Activated CD8-positive, alpha-beta T cell treated with anti-CD3 and anti-CD28 coated beads for 36 hours (primary cell): ENCODE measurements at regions of chr2 and their contacts with region 1.

Region 1: GRCh38 chr2:240840435-240841080 is 20.5 kb upstream of the KIF1A start:
- DNase-seq: peak; percentile 49
- ATAC-seq: peak; percentile 49
- H3K4me3 Mint-ChIP-seq: no peak overlapping the region
- H3K27ac Mint-ChIP-seq: no peak overlapping the region
- H3K4me1 Mint-ChIP-seq: no peaks in the 10 kb centered on the region
- H3K27me3 Mint-ChIP-seq: no peaks in the 10 kb centered on the region
- CTCF ChIP-seq: peak; percentile 36

Region 2: DNA sequence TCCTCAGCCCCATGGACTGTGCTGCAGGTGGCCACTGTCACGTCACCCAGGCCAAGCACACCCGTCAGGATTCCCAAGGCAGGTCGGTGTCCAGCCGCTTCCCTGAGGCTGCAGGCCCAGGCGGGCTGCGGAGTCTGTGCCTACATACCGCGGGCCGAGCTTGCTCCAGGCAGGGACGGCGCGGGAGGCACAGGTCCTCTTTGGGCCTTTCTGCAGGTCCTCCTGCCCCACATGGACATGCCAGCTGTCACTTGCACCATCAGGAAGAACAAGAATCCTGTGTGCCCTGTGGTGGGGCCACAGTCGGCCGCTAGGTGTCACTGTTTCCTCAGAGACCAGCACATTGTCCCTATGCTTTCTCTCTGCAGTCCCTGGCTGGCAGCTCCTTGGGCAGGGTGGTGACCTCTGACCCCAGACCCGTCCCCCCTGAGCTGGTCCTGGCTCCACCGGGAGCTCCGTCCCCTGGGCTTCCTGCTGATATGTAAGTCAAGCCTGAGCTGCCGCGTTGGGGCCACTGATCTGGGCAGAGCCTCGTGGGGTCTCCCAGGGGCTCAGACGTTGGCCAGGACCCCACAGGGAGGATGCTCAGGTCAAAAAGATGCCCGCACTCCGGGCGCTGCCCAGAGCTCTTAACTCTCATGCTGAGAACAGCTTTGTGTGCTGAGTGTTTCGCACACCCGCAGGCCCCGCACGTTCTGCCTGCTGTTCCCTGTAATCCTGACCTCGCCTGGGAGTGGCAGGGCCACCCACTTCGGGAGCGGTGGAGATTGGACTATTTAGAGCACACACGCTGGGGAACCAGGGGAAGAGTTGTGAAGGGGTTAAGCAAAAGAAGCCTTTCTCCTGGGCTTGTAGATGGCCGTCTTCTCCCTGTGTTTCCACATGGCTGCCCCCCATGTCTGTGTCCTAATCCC is 10.8 kb after region 1 on chr2:
- CTCF ChIA-PET with region 1: interaction called, 18 read pairs
- POLR2A ChIA-PET with region 1: no interaction called
- intact Hi-C with region 1: no loop called
- DNase-seq: peak; percentile 90
- ATAC-seq: peak; percentile 89
- H3K4me3 Mint-ChIP-seq: no peak overlapping the region
- H3K27ac Mint-ChIP-seq: no peak overlapping the region
- H3K4me1 Mint-ChIP-seq: no peaks in the 10 kb centered on the region
- H3K27me3 Mint-ChIP-seq: no peaks in the 10 kb centered on the region
- CTCF ChIP-seq: peak; percentile 93

Region 3: GRCh38 chr2:240873805-240874714 is 33.5 kb after region 1 on chr2:
- CTCF ChIA-PET with region 1: no interaction called
- POLR2A ChIA-PET with region 1: no interaction called
- intact Hi-C with region 1: no loop called
- DNase-seq: no peak
- ATAC-seq: no peak
- H3K4me3 Mint-ChIP-seq: no peak overlapping the region
- H3K27ac Mint-ChIP-seq: no peak overlapping the region
- H3K4me1 Mint-ChIP-seq: no peaks in the 10 kb centered on the region
- H3K27me3 Mint-ChIP-seq: no peaks in the 10 kb centered on the region
- CTCF ChIP-seq: no peak